Activated CD8-positive, alpha-beta T cell treated with anti-CD3 and anti-CD28 coated beads for 36 hours (primary cell): ENCODE measurements at regions of chr7 and their contacts with region 1.

Region 1: GRCh38 chr7:23523486-23524075 is 8.2 kb downstream of the TRA2A start:
- DNase-seq: no peak
- ATAC-seq: no peak
- H3K4me3 Mint-ChIP-seq: no peak overlapping the region
- H3K27ac Mint-ChIP-seq: peak overlapping the region; percentile 46
- H3K4me1 Mint-ChIP-seq: peaks cover 61% of the 10 kb centered on the region
- H3K27me3 Mint-ChIP-seq: no peaks in the 10 kb centered on the region
- CTCF ChIP-seq: no peak

Region 2: DNA sequence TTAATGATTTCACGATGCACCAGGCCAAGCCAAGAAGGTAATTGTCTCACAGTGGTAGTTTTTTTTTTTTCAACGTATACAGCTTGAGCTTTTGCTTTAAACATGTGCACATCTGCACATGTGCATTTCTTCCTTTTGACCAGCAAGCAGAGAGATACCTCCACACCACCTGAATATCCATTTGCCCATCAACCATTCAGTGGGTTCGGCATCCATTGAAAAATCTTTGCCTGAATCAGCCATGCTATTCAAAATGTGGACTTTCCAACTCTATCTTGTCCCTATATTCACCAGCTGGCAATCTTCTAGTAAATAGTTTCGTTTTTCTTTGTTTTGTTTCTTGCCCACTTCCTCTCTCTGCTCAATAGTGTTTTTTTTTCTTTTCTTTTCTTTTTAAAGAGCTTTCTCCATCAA is 15.9 kb after region 1 on chr7:
- CTCF ChIA-PET with region 1: interaction called, 13 read pairs
- POLR2A ChIA-PET with region 1: interaction called, 7 read pairs
- intact Hi-C with region 1: no loop called
- DNase-seq: no peak
- ATAC-seq: peak; percentile 51
- H3K4me3 Mint-ChIP-seq: peak overlapping the region; percentile 1
- H3K27ac Mint-ChIP-seq: peak overlapping the region; percentile 81
- H3K4me1 Mint-ChIP-seq: peaks cover 15% of the 10 kb centered on the region
- H3K27me3 Mint-ChIP-seq: no peaks in the 10 kb centered on the region
- CTCF ChIP-seq: no peak